H1 (cell line): ENCODE measurements at regions of chr11 and their contacts with region 1.

Region 1: GRCh38 chr11:63032457-63032856 is 16.8 kb upstream of the SLC22A8 start:
- DNase-seq: no peak
- H3K4me3 ChIP-seq: no peak overlapping the region
- H3K27ac ChIP-seq: no peak overlapping the region
- H3K4me1 ChIP-seq: peaks cover 0 to 4% (median 1%) of the 10 kb centered on the region in 4 experiments; a peak in 2 of 7 replicates
- H3K27me3 ChIP-seq: no peaks in the 10 kb centered on the region
- CTCF ChIP-seq: no peak
- EP300 ChIP-seq: no peak
- POLR2A ChIP-seq: no peak
- RAD21 ChIP-seq: no peak

Region 2: GRCh38 chr11:62860835-62861563 is 171.5 kb before region 1 on chr11:
- CTCF ChIA-PET with region 1: no interaction called
- POLR2A ChIA-PET with region 1: no interaction called
- DNase-seq: no peak
- H3K4me3 ChIP-seq: no peak overlapping the region
- H3K27ac ChIP-seq: no peak overlapping the region
- H3K4me1 ChIP-seq: peaks cover 0 to 10% (median 6%) of the 10 kb centered on the region in 4 experiments; a peak in 4 of 7 replicates
- H3K27me3 ChIP-seq: no peaks in the 10 kb centered on the region
- CTCF ChIP-seq: no peak
- EP300 ChIP-seq: no peak
- POLR2A ChIP-seq: no peak
- RAD21 ChIP-seq: no peak

Region 3: DNA sequence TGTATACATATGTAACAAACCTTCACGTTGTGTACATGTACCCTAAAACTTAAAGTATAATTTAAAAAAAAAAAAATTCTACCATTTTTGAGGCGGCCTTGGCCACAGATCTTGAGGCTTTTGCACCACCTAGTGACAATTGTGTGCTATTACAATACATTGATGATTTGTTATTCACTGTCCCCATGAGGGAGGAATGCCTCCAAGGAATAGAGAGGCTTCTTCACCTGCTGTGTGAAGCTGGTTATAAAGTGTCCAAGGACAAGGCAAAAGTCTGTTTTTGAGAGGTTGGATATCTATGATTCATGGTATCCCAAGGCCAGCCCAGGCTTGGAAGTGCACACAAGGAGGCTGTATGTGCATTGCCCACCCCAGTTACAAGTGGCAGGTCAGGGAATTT is 180.3 kb after region 1 on chr11:
- CTCF ChIA-PET with region 1: interaction called, 30 read pairs
- POLR2A ChIA-PET with region 1: interaction called, 3 read pairs
- DNase-seq: no peak
- H3K4me3 ChIP-seq: no peak overlapping the region
- H3K27ac ChIP-seq: no peak overlapping the region
- H3K4me1 ChIP-seq: no peaks in the 10 kb centered on the region
- H3K27me3 ChIP-seq: no peaks in the 10 kb centered on the region
- CTCF ChIP-seq: peak in 2 of 3 experiments; percentile 41 to 56; a peak in 3 of 4 replicates
- EP300 ChIP-seq: no peak
- POLR2A ChIP-seq: no peak
- RAD21 ChIP-seq: peak; percentile 74 to 76